ENCODE measurements at regions of chr4 and their contacts with region 1.

Region 1: DNA sequence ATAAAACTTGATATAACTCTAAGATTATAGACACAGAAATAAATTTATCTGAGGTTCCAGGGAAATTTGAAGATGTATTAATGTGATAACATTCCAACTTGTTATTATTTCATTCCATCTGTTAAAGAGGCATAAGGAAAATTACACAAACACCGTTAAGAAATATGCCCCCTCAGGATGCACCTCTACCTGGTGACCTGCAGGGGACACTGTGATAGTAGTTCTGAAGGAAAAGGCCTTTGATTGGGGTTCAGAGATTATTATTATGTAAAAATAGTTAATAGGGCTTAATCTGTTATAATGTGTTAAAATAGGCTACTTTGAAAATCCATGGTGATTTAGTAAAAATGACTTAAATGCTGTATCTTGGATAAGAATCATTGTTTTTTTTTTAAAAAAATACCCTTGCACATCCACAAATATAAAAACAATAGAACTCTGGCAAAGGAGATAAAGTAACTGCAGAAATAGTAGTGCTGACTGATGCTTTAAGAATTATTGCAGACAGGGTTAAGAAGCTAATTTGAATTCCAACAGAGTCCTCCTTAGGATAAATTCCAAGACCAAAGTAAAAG is 6.1 kb upstream of the ABRAXAS1 start:
- DNase-seq: peak; percentile 18
- ATAC-seq: peak; percentile 79
- H3K4me3 ChIP-seq: no peak overlapping the region
- H3K27ac ChIP-seq: no peak overlapping the region
- H3K4me1 ChIP-seq: no peaks in the 10 kb centered on the region
- H3K27me3 ChIP-seq: no peaks in the 10 kb centered on the region
- CTCF ChIP-seq: peak; percentile 65
- POLR2A ChIP-seq: no peak
- RAD21 ChIP-seq: peak; percentile 48

Region 2: GRCh38 chr4:83212041-83212851 is 278.7 kb before region 1 on chr4:
- CTCF ChIA-PET with region 1: no interaction called
- POLR2A ChIA-PET with region 1: no interaction called
- dilution Hi-C with region 1: no loop called
- in situ Hi-C with region 1: no loop called
- intact Hi-C with region 1: no loop called
- DNase-seq: no peak
- ATAC-seq: no peak
- H3K4me3 ChIP-seq: no peak overlapping the region
- H3K27ac ChIP-seq: no peak overlapping the region
- H3K4me1 ChIP-seq: no peaks in the 10 kb centered on the region
- H3K27me3 ChIP-seq: no peaks in the 10 kb centered on the region; the same call in 1 of the 2 replicates
- CTCF ChIP-seq: no peak
- POLR2A ChIP-seq: no peak
- RAD21 ChIP-seq: no peak

Region 3: GRCh38 chr4:83546786-83547185 is 55.8 kb after region 1 on chr4:
- CTCF ChIA-PET with region 1: no interaction called
- POLR2A ChIA-PET with region 1: interaction called, 16 read pairs
- dilution Hi-C with region 1: no loop called
- in situ Hi-C with region 1: no loop called
- intact Hi-C with region 1: no loop called
- DNase-seq: no peak
- ATAC-seq: no peak
- H3K4me3 ChIP-seq: no peak overlapping the region
- H3K27ac ChIP-seq: no peak overlapping the region
- H3K4me1 ChIP-seq: peaks cover 3% of the 10 kb centered on the region
- H3K27me3 ChIP-seq: no peaks in the 10 kb centered on the region
- CTCF ChIP-seq: no peak
- POLR2A ChIP-seq: no peak
- RAD21 ChIP-seq: no peak

Region 4: GRCh38 chr4:84750253-84750959 is 1259.4 kb after region 1 on chr4:
- CTCF ChIA-PET with region 1: no interaction called
- POLR2A ChIA-PET with region 1: no interaction called
- dilution Hi-C with region 1: no loop called
- in situ Hi-C with region 1: no loop called
- intact Hi-C with region 1: no loop called
- DNase-seq: peak; percentile 65
- ATAC-seq: peak; percentile 59
- H3K4me3 ChIP-seq: no peak overlapping the region
- H3K27ac ChIP-seq: no peak overlapping the region
- H3K4me1 ChIP-seq: no peaks in the 10 kb centered on the region
- H3K27me3 ChIP-seq: no peaks in the 10 kb centered on the region
- CTCF ChIP-seq: peak; percentile 64
- POLR2A ChIP-seq: no peak
- RAD21 ChIP-seq: peak; percentile 60

Measured in IMR-90 (cell line).